Mammary epithelial cell (primary cell): ENCODE measurements at regions of chr19 and their contacts with region 1.

Region 1: DNA sequence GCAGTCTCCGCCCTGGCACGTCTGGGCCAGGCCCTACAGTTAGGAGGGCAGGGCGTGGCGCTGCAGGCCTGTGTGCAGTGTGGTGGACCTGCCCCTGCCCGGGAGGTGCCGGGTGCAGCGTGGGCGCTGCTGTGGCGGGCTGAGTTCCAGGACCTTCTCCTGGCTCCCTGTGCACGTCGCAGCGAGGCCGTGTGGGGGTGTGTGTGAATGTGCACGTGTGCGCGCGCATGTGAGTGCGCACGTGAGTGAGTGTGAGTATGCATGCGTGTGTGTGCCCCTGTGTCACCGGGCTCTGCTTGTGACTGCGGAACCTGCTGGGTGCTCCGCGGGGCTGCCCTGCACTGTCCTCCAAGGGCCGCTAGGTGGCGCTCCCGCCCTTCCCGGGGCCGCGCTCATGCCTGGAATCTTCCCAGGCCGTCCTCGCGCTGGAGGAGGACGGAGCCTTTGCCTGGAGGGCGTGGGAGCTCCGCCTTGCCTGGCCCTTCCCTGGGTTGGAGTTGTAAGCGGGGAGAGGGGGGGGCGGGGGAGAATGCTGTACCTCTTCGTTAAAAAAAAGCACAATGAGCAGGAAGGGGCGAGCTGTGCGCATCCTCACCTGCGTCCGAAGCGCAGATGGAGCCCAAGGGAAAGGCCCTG is 79.3 kb downstream of the KDM4B start:
- DNase-seq: peak; percentile 78
- H3K4me3 ChIP-seq: peak overlapping the region in 1 of 3 experiments; percentile 4
- H3K27ac ChIP-seq: no peak overlapping the region
- H3K4me1 ChIP-seq: peaks cover 19% of the 10 kb centered on the region
- H3K27me3 ChIP-seq: no peaks in the 10 kb centered on the region
- CTCF ChIP-seq: peak; percentile 94 to 98

Region 2: DNA sequence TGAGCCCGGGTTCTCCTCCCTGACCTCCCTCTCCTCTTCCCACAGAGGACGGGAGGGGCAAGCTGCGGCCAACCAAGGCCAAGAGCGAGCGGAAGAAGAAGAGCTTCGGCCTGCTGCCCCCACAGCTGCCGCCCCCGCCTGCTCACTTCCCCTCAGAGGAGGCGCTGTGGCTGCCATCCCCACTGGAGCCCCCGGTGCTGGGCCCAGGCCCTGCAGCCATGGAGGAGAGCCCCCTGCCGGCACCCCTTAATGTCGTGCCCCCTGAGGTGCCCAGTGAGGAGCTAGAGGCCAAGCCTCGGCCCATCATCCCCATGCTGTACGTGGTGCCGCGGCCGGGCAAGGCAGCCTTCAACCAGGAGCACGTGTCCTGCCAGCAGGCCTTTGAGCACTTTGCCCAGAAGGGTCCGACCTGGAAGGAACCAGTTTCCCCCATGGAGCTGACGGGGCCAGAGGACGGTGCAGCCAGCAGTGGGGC is 82.9 kb after region 1 on chr19:
- CTCF ChIA-PET with region 1: no interaction called
- dilution Hi-C with region 1: loop called (anchors 5 kb)
- in situ Hi-C with region 1: no loop called
- intact Hi-C with region 1: no loop called
- DNase-seq: no peak
- H3K4me3 ChIP-seq: no peak overlapping the region
- H3K27ac ChIP-seq: no peak overlapping the region
- H3K4me1 ChIP-seq: no peaks in the 10 kb centered on the region
- H3K27me3 ChIP-seq: no peaks in the 10 kb centered on the region
- CTCF ChIP-seq: no peak

Region 3: GRCh38 chr19:5376928-5377327 is 328.7 kb after region 1 on chr19:
- CTCF ChIA-PET with region 1: no interaction called
- dilution Hi-C with region 1: no loop called
- in situ Hi-C with region 1: no loop called
- intact Hi-C with region 1: loop called (anchors 1 kb)
- DNase-seq: no peak
- H3K4me3 ChIP-seq: no peak overlapping the region
- H3K27ac ChIP-seq: no peak overlapping the region
- H3K4me1 ChIP-seq: no peaks in the 10 kb centered on the region
- H3K27me3 ChIP-seq: no peaks in the 10 kb centered on the region
- CTCF ChIP-seq: no peak

Region 4: DNA sequence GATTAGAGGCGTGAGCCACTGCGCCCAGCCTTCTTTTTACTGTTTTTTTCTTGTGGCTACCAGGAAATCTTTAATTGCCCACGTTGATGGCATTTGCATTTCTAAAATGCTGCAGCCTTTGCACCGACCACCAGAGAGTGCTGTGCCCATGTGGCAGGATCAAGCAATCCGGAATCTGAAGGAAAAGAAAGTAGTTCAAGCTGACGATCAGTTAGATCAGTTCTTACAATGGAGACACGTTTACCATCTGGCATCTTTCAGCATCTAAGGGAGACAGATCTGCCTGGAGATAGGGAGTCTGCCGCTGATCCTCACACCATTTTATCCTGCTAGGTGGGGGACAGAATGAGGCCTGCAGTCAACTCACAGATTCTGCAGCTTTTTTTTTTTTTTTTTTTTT is 499.7 kb after region 1 on chr19:
- CTCF ChIA-PET with region 1: no interaction called
- dilution Hi-C with region 1: loop called (anchors 10 kb)
- in situ Hi-C with region 1: no loop called
- intact Hi-C with region 1: loop called (anchors 2 kb)
- DNase-seq: peak; percentile 46
- H3K4me3 ChIP-seq: no peak overlapping the region
- H3K27ac ChIP-seq: no peak overlapping the region
- H3K4me1 ChIP-seq: no peaks in the 10 kb centered on the region
- H3K27me3 ChIP-seq: no peaks in the 10 kb centered on the region
- CTCF ChIP-seq: peak; percentile 81 to 87

Region 5: GRCh38 chr19:5607318-5608270 is 559.4 kb after region 1 on chr19:
- CTCF ChIA-PET with region 1: no interaction called
- dilution Hi-C with region 1: loop called (anchors 5 kb)
- in situ Hi-C with region 1: no loop called
- intact Hi-C with region 1: no loop called
- DNase-seq: no peak
- H3K4me3 ChIP-seq: no peak overlapping the region
- H3K27ac ChIP-seq: no peak overlapping the region
- H3K4me1 ChIP-seq: no peaks in the 10 kb centered on the region
- H3K27me3 ChIP-seq: no peaks in the 10 kb centered on the region
- CTCF ChIP-seq: no peak